Left colon (tissue), 2 donors: ENCODE measurements at regions of chr11 and their contacts with region 1.

Region 1: DNA sequence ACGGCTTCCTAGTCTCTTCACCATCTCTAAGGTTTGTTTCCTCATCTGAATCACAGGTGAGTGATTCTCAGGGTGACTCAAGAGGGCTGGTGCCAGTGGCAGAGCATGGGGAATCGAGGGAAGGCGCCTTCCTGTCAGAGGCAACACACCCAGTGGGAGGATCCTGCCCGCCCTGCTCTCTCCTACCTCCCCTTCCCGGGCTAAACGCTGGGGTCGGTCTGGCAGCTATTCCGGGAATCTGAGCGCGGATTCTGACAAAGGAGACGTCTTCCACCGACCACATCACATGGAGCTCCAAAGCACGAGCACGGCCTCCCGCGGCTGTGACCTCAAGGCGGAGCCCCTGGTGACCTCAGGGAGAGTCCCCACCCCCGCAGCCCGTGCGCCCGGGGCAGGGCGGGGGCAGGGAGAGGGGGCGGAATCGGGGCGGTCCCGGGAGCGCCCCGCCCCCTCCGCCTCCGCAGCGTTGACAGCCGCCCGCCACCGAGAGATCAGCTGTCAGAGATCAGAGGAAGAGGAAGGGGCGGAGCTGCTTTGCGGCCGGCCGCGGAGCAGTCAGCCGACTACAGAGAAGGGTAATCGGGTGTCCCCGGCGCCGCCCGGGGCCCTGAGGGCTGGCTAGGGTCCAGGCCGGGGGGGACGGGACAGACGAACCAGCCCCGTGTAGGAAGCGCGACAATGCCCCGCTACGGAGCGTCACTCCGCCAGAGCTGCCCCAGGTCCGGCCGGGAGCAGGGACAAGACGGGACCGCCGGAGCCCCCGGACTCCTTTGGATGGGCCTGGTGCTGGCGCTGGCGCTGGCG is at the start of gene SMPD1:
- DNase-seq: peak; percentile 95 to 96
- ATAC-seq: peak; percentile 93
- total RNA-seq, gene SMPD1: 50.8 to 136 TPM

Region 2: GRCh38 chr11:6084587-6084986 is 305.5 kb before region 1 on chr11:
- intact Hi-C with region 1: no loop called
- DNase-seq: no peak
- ATAC-seq: no peak

Region 3: DNA sequence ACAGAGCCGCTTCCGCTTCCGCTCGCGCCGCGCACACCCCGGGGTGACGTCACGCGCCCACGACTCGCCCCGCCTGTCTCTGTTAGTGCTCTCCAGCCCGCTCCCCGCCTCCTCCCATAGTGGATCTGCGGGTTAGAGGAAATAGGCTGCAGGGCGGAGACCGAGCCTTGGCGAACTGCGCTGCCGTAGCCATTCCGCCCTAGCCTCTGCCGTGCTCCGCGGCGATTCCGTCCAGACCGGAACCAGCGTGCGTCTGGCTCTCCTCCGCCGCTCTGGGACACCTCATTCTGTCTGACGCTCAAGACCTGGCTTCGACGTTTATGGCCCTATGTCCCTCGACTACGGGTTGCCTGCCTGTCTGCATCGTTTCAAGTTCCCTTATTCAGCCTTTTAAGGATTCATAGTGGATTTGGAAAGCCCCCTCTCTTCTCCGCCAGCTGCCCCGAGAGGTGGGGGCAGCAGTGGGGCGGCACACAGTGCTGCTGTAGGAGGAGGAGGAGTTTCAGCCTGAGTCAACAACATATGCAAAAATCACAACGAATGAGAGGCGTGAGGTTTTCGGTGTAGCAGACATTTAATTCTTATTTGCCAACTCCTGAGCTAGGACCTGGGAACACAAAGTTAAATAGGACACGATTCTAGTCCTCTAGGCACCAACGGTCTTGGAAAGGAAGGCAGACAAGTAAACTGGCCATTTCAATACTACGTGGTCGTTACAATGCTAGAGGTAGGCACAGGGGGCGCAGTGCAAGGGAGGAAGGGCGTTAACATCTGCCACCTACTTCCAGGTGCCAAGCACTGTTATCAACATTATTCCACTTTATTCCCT is 222.3 kb after region 1 on chr11 and contains the start of gene TAF10:
- intact Hi-C with region 1: loop called in 1 of 2 experiments (anchors 10 kb)
- DNase-seq: peak; percentile 98
- ATAC-seq: peak; percentile 93
- total RNA-seq, gene TAF10: 113 to 146 TPM

Region 4: GRCh38 chr11:6682936-6683861 is 293.1 kb after region 1 on chr11 and contains the start of gene MRPL17:
- intact Hi-C with region 1: no loop called
- DNase-seq: peak; percentile 99
- ATAC-seq: peak; percentile 96
- total RNA-seq, gene MRPL17: 24.7 to 29.9 TPM